ENCODE measurements at regions of chr3 and their contacts with region 1.

Region 1: GRCh38 chr3:194333212-194333980 is 17.7 kb downstream of the CPN2 start:
- DNase-seq: peak; percentile 94
- ATAC-seq: peak; percentile 98
- H3K4me3 Mint-ChIP-seq: peak overlapping the region; percentile 54
- H3K27ac Mint-ChIP-seq: no peak overlapping the region
- H3K4me1 Mint-ChIP-seq: no peaks in the 10 kb centered on the region
- H3K27me3 Mint-ChIP-seq: peaks cover 25% of the 10 kb centered on the region

Region 2: GRCh38 chr3:194224471-194225415 is 108.7 kb before region 1 on chr3:
- CTCF ChIA-PET with region 1: no interaction called
- POLR2A ChIA-PET with region 1: no interaction called
- intact Hi-C with region 1: no loop called
- DNase-seq: peak; percentile 25
- ATAC-seq: peak; percentile 57
- H3K4me3 Mint-ChIP-seq: no peak overlapping the region
- H3K27ac Mint-ChIP-seq: no peak overlapping the region
- H3K4me1 Mint-ChIP-seq: peaks cover 8% of the 10 kb centered on the region
- H3K27me3 Mint-ChIP-seq: peaks cover 21% of the 10 kb centered on the region

Region 3: GRCh38 chr3:194344012-194344411 is 10.6 kb after region 1 on chr3:
- CTCF ChIA-PET with region 1: interaction called, 59 read pairs
- POLR2A ChIA-PET with region 1: no interaction called
- intact Hi-C with region 1: no loop called
- DNase-seq: peak; percentile 87
- ATAC-seq: peak; percentile 80
- H3K4me3 Mint-ChIP-seq: no peak overlapping the region
- H3K27ac Mint-ChIP-seq: no peak overlapping the region
- H3K4me1 Mint-ChIP-seq: no peaks in the 10 kb centered on the region
- H3K27me3 Mint-ChIP-seq: peaks cover 2% of the 10 kb centered on the region

Region 4: DNA sequence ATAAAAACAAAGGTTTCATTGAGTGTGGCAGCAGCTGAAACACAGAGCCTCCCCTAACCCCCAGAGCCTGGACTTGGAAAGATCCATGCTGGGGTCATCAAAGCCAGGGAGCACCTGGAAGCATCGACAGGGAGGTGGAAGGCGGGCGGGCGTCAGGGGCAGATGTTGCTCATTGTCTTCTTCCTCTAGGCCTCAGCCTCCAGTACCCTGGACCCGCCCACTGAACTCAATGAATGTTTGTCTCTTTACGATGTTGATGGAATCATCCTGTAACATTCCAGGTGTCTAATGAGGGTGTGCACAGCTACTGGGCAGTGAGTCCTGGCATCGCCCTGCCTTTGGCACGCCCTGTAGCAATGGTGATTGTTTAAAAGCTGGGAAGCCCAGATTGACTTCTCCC is 55.9 kb after region 1 on chr3:
- CTCF ChIA-PET with region 1: interaction called, 10 read pairs
- POLR2A ChIA-PET with region 1: no interaction called
- intact Hi-C with region 1: no loop called
- DNase-seq: no peak
- ATAC-seq: no peak
- H3K4me3 Mint-ChIP-seq: no peak overlapping the region
- H3K27ac Mint-ChIP-seq: no peak overlapping the region
- H3K4me1 Mint-ChIP-seq: no peaks in the 10 kb centered on the region
- H3K27me3 Mint-ChIP-seq: no peaks in the 10 kb centered on the region

Region 5: DNA sequence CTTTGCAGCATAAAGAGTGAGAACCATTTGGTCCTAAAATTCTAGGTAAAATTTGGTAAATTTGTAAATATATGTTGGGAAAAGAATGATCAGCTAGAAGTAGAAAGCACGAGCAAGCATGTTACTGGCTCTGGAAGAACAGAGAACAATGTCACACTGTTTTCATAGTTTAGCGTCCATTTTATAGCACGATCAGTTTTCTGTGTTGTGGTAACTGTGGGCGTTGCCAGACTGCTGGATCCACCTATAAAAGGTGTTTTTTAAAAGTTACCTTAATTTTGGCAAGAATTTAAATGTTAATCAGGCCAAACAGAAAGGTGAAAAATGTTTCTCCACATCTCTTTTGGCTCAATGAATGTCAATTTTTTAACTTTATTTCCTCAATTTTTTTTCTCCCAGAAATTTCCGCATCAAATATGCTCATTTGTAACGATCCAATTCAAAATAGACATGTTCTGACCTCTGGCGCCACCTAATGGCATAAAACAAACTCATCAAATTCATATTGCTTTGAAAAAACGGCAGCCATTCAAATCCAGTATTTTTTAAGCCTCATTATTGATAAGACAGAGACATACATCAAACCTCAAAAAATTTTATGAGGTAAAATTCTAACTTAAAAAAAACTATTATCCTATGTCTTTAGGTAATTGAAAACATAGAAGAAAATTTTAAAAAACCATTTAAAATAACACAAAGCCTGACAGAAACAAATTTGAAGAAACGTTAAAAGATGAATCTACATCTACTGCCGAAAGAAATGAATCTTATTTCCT is 71.2 kb after region 1 on chr3:
- CTCF ChIA-PET with region 1: interaction called, 90 read pairs
- POLR2A ChIA-PET with region 1: no interaction called
- intact Hi-C with region 1: loop called (anchors 1 kb)
- DNase-seq: peak; percentile 59
- ATAC-seq: no peak
- H3K4me3 Mint-ChIP-seq: no peak overlapping the region
- H3K27ac Mint-ChIP-seq: peak overlapping the region; percentile 51
- H3K4me1 Mint-ChIP-seq: peaks cover 26% of the 10 kb centered on the region
- H3K27me3 Mint-ChIP-seq: no peaks in the 10 kb centered on the region

Region 6: DNA sequence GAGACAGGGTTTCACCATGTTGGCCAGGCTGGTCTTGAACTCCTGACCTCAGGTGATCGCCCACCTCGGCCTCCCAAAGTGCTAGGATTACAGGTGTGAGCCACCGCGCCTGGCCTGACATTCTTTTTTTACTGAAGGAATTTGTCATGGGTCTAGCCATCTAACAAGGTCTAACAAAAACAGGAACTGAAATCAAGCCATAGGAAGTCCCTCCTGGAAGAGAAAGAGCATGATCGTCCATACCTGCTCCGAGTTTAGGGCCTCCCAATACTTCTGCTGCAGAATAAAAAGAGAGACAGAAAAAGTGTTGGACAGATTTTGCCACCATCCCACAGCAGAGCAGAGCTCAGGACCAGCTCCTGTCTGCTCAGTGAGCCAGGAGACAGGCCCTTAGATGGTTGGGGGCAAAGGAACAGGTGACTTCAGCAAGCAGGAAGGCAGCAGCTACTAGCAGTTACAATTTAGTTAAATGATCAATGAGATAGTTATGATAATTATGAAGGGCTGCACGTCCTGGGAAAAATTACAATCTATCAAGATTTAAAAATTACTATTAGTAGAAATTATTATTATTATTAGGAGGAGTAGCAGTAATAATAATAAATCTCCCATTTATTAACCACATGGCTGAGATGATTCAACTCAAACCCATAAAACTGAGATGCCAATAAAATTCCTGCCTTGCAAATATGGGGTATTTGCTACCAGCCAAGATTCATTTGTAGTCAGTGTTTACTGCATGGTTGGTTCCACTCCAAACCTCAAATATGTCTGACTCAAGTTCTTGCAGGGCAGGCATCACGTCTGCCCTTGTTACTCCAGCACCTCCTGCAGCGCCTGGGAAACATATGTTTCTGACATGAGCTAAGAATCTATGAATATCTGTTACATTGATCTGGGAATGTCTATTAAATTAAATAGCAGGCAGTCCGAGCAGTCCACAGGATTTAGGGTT is 259.7 kb after region 1 on chr3:
- CTCF ChIA-PET with region 1: interaction called, 7 read pairs
- POLR2A ChIA-PET with region 1: no interaction called
- intact Hi-C with region 1: loop called (anchors 1 to 2 kb)
- DNase-seq: no peak
- ATAC-seq: no peak
- H3K4me3 Mint-ChIP-seq: no peak overlapping the region
- H3K27ac Mint-ChIP-seq: no peak overlapping the region
- H3K4me1 Mint-ChIP-seq: peaks cover 3% of the 10 kb centered on the region
- H3K27me3 Mint-ChIP-seq: no peaks in the 10 kb centered on the region

Region 7: DNA sequence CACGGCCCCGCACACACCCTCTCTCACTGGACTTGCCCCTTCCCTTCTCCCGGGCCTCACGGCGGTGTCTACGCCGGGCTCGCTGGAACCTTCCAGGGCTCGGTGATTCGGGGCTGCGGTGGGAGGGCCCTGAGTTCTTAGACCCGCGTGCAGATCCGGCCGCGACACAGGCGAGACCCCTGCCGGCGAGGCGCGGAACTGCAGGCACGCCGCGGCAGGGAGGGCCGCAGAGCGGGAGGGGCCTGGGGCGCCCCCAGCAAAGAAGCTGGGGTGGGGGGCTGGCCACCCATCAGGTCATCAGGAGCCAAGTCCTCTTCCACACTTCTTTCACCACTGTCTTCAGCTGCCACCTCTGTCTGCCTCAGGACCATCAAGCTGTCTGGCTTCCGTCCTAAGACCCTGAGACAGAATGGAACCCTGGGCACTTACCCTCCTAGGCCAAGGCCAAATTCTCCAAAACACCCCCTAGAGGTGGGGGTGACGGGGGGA is 773.1 kb after region 1 on chr3:
- CTCF ChIA-PET with region 1: no interaction called
- POLR2A ChIA-PET with region 1: no interaction called
- intact Hi-C with region 1: loop called in 1 of 2 experiments (anchors 1 kb)
- DNase-seq: peak; percentile 80
- ATAC-seq: peak; percentile 85
- H3K4me3 Mint-ChIP-seq: peak overlapping the region; percentile 9
- H3K27ac Mint-ChIP-seq: peak overlapping the region; percentile 55
- H3K4me1 Mint-ChIP-seq: peaks cover 4% of the 10 kb centered on the region
- H3K27me3 Mint-ChIP-seq: no peaks in the 10 kb centered on the region